ENCODE measurements at regions of chr11 and their contacts with region 1.

Region 1: GRCh38 chr11:72752088-72752914 is at the start of gene ARAP1:
- DNase-seq: no peak
- ATAC-seq: peak; percentile 83
- H3K4me3 ChIP-seq: peak within 1 kb of the TSS; percentile 99
- H3K27ac ChIP-seq: peak within 1 kb of the TSS; percentile 80
- H3K4me1 ChIP-seq: peaks cover 33% of the 10 kb centered on the region
- H3K27me3 ChIP-seq: no peaks in the 10 kb centered on the region
- CTCF ChIP-seq: 0 out of 6 replicates have a peak, but pooled peaks of 1 of the 3 experiments have one; percentile 5
- EP300 ChIP-seq: no peak
- POLR2A ChIP-seq: peak; percentile 74; the same call in 1 of the 2 replicates
- RAD21 ChIP-seq: no peak
- polyA plus RNA-seq, gene ARAP1: 0.55 to 0.85 TPM

Region 2: GRCh38 chr11:72736452-72737069 is 15.7 kb before region 1 on chr11:
- CTCF ChIA-PET with region 1: interaction called, 4 read pairs
- POLR2A ChIA-PET with region 1: interaction called, 24 read pairs
- RAD21 ChIA-PET with region 1: interaction called, 13 read pairs
- SMC1A ChIA-PET with region 1: interaction called, 22 read pairs
- in situ Hi-C with region 1: no loop called
- intact Hi-C with region 1: no loop called
- DNase-seq: no peak
- ATAC-seq: peak; percentile 26
- H3K4me3 ChIP-seq: peak overlapping the region; percentile 25
- H3K27ac ChIP-seq: peak overlapping the region; percentile 72
- H3K4me1 ChIP-seq: peaks cover 54% of the 10 kb centered on the region
- H3K27me3 ChIP-seq: no peaks in the 10 kb centered on the region
- CTCF ChIP-seq: no peak
- EP300 ChIP-seq: no peak
- POLR2A ChIP-seq: no peak
- RAD21 ChIP-seq: no peak

Region 3: DNA sequence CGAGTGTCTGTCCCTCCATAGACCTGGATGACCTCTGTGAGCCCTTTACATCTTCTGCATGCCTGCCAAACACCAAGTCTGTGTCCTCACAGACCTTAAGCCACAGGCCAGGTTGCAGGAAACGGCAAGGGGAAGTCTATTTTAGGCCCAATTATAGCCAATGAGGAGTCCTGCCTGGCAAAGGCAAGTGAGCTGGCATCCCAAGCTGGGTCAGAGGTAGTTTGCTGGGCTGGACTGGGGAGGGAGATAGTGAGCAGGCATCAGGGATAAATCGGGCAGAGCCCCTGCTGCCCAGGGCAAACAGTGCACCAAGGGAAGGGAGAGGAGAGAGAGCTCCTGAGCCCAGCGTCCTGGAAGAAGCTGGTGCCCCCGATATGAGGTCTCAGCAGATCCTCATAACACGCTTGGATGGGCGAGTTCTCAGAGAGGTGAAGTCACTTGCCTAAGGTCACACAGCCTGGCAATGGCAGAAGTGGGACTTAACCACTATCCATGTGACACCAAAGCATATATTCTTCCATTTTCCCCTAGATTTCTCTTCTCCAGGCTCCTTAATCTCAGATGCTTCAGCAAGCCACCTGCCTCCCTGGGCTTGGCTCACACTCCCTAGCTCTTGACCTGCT is 620.2 kb after region 1 on chr11:
- CTCF ChIA-PET with region 1: no interaction called
- POLR2A ChIA-PET with region 1: no interaction called
- RAD21 ChIA-PET with region 1: no interaction called
- SMC1A ChIA-PET with region 1: no interaction called
- in situ Hi-C with region 1: no loop called
- intact Hi-C with region 1: no loop called
- DNase-seq: no peak
- ATAC-seq: no peak
- H3K4me3 ChIP-seq: no peak overlapping the region
- H3K27ac ChIP-seq: no peak overlapping the region
- H3K4me1 ChIP-seq: peaks cover 21% of the 10 kb centered on the region
- H3K27me3 ChIP-seq: no peaks in the 10 kb centered on the region
- CTCF ChIP-seq: peak; percentile 15 to 35 (median 23); a peak in 3 of 6 replicates
- EP300 ChIP-seq: no peak
- POLR2A ChIP-seq: no peak
- RAD21 ChIP-seq: no peak